WTC11 (cell line): ENCODE measurements at regions of chr1 and their contacts with region 1.

Region 1: GRCh38 chr1:102772831-102773230 is 335.5 kb downstream of the COL11A1 start:
- DNase-seq: no peak
- ATAC-seq: peak; percentile 78
- H3K4me3 Mint-ChIP-seq: no peak overlapping the region
- H3K27ac Mint-ChIP-seq: no peak overlapping the region
- H3K4me1 Mint-ChIP-seq: peaks cover 18% of the 10 kb centered on the region
- H3K27me3 Mint-ChIP-seq: no peaks in the 10 kb centered on the region
- CTCF ChIP-seq: no peak

Region 2: DNA sequence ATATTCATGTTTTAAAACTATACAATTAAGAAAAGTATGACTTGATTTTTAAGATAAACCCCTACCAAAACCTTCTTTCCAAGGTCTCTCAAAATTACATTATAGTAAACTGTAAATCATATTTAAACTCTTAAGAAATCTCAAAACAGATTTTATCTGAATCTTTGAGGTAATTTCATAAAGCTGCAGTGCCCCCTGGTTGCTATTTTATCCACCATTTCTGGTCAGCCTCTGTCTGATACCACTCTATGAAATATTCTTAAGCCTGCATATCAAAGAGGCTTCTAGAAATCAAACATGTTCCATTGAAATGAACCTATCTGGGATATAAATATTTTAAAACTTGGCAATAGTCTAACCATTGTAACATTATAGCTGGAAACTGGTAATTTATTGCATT is 18.2 kb after region 1 on chr1:
- CTCF ChIA-PET with region 1: interaction called, 11 read pairs
- POLR2A ChIA-PET with region 1: no interaction called
- DNase-seq: no peak
- ATAC-seq: no peak
- H3K4me3 Mint-ChIP-seq: no peak overlapping the region
- H3K27ac Mint-ChIP-seq: no peak overlapping the region
- H3K4me1 Mint-ChIP-seq: 0 out of 2 replicates have a peak, but pooled peaks cover 2% of the 10 kb centered on the region
- H3K27me3 Mint-ChIP-seq: no peaks in the 10 kb centered on the region
- CTCF ChIP-seq: no peak